Right ventricle myocardium superior (tissue), 1 donor: ENCODE measurements at regions of chr6 and their contacts with region 1.

Region 1: DNA sequence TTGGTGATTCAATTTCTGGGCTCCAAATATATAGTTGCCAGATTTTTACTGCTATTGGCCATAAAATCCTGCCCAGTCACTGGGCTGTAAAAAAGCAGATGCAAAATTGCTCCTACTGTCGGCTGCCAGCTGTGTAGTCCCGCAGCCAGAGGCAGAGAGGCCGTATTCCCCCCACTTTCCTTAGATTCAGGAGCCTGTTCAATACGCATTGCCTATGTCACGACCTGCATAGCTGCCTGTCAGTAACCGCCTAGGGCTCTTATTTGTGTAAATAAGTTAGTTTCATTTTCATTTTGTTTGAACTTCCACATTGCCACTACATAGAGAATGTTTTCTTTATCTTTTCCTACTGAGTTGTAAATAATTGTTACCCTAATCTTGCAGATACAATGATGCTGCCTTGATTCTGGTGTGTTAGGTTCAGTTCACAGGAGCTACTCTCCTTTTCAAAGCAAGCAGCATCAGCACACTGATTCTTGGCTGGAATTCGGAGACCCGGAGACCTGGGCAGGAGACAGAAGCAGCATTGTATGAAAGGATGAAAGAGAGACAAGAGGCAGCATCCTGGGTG is 46.0 kb upstream of the UST start:
- DNase-seq: no peak
- ATAC-seq: peak; percentile 63

Region 2: GRCh38 chr6:148578245-148578732 is 122.5 kb before region 1 on chr6:
- intact Hi-C with region 1: loop called (anchors 10 kb)
- DNase-seq: peak; percentile 87
- ATAC-seq: peak; percentile 100